Activated naive CD4-positive, alpha-beta T cell treated with anti-CD3 and anti-CD28 coated beads for 36 hours (primary cell): ENCODE measurements at regions of chr22 and their contacts with region 1.

Region 1: DNA sequence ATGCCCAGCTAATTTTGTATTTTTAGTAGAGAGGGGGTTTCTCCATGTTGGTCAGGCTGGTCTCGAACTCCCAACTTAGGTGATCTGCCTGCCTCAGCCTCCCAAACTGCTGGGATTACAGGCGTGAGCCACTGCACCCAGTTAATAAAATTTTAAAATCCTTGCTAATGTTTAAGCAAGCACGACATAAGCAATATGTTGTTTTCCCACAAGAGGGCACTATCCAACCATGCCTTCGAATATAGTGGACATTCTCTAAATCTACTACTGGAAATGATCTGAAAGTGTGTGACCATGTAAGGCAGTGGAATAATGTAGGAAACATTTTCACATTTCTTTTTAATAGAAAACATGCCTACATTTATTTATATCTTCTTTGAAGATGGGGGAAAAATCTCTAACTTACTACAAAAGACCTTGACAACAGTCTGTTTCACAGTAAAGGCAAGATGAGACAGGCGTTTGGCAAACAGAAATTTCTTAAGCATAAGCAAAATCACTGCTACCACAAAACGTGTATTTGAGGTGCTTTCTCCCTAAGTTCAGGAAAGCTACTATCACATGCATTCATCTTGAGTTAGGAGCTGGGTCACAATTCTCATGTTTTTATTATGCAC is 38.2 kb downstream of the PITPNB start:
- DNase-seq: peak; percentile 29
- H3K4me3 Mint-ChIP-seq: no peak overlapping the region
- H3K27ac Mint-ChIP-seq: no peak overlapping the region
- H3K4me1 Mint-ChIP-seq: peaks cover 28% of the 10 kb centered on the region
- H3K27me3 Mint-ChIP-seq: no peaks in the 10 kb centered on the region

Region 2: GRCh38 chr22:27919222-27919941 is 38.5 kb after region 1 on chr22 and contains the start of gene PITPNB:
- CTCF ChIA-PET with region 1: interaction called, 8 read pairs
- intact Hi-C with region 1: loop called (anchors 5 kb)
- DNase-seq: peak; percentile 98
- H3K4me3 Mint-ChIP-seq: peak within 1 kb of the TSS; percentile 96
- H3K27ac Mint-ChIP-seq: peak within 1 kb of the TSS; percentile 96
- H3K4me1 Mint-ChIP-seq: peaks cover 61% of the 10 kb centered on the region
- H3K27me3 Mint-ChIP-seq: no peaks in the 10 kb centered on the region
- total RNA-seq, gene PITPNB: 76.4 to 78.7 TPM